ENCODE measurements at regions of chr16 and their contacts with region 1.

Region 1: GRCh38 chr16:77236063-77236511 is 36.9 kb downstream of the SYCE1L start:
- DNase-seq: peak; percentile 93
- H3K4me3 Mint-ChIP-seq: no peak overlapping the region
- H3K27ac Mint-ChIP-seq: no peak overlapping the region
- H3K4me1 Mint-ChIP-seq: peaks cover 3% of the 10 kb centered on the region
- H3K27me3 Mint-ChIP-seq: peaks cover 19% of the 10 kb centered on the region

Region 2: DNA sequence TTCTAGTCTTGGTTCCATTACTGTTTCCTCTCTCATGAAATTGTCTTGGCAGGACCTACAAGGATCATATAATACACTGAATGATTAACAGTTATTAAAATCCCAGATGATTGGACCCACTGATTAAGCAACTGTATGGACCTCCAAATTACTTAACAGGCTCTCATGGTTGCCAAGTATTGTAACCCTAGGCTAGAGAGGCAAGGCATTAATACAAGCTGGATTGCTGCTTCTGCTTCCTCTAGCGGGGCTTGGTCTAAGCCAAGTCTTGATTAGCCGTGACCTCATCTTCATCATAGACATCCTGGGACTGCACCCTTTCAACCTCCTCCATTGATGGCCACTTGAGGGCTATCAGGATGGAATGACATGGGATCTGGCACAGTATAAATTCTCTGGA is 10.1 kb after region 1 on chr16:
- CTCF ChIA-PET with region 1: interaction called, 13 read pairs
- intact Hi-C with region 1: no loop called
- DNase-seq: no peak
- H3K4me3 Mint-ChIP-seq: no peak overlapping the region
- H3K27ac Mint-ChIP-seq: no peak overlapping the region
- H3K4me1 Mint-ChIP-seq: no peaks in the 10 kb centered on the region
- H3K27me3 Mint-ChIP-seq: no peaks in the 10 kb centered on the region

Region 3: GRCh38 chr16:77376358-77376757 is 140.3 kb after region 1 on chr16:
- CTCF ChIA-PET with region 1: interaction called, 18 read pairs
- intact Hi-C with region 1: loop called (anchors 1 kb)
- DNase-seq: peak; percentile 7
- H3K4me3 Mint-ChIP-seq: no peak overlapping the region
- H3K27ac Mint-ChIP-seq: no peak overlapping the region
- H3K4me1 Mint-ChIP-seq: no peaks in the 10 kb centered on the region
- H3K27me3 Mint-ChIP-seq: peaks cover 4% of the 10 kb centered on the region

Region 4: DNA sequence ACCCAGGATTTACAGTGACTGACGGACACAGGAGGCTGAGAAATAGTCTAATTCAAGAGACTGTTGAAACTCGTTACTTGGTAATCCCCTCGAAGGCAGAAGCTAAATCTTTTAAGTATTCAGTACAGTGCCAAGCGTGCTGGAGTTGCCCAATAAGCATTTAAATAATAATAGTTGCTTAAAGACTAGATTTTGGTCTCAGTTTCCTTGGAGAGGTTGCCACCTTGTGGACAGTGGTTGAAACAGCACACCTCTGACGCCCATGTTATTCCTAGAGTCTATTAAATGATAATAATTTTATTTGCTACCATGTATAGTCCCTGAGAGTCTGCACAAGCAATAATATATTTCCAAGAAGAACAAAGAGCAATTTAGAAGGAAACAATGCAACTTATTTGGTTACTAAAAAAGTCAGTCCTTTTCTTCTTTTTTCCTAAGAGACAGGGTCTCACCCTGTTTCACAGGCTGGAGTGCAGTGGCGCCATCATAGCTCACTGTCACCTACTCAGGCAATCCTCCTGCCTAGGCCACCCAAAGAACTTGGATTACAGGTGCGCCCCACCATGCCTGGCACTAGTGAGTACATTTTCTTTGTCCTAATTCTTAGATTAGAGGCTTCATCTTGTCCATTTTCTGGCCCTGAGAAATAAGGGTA is 348.2 kb after region 1 on chr16:
- CTCF ChIA-PET with region 1: interaction called, 179 read pairs
- intact Hi-C with region 1: loop called (anchors 1 kb)
- DNase-seq: peak; percentile 63
- H3K4me3 Mint-ChIP-seq: no peak overlapping the region
- H3K27ac Mint-ChIP-seq: no peak overlapping the region
- H3K4me1 Mint-ChIP-seq: no peaks in the 10 kb centered on the region
- H3K27me3 Mint-ChIP-seq: peaks cover 17% of the 10 kb centered on the region

Region 5: DNA sequence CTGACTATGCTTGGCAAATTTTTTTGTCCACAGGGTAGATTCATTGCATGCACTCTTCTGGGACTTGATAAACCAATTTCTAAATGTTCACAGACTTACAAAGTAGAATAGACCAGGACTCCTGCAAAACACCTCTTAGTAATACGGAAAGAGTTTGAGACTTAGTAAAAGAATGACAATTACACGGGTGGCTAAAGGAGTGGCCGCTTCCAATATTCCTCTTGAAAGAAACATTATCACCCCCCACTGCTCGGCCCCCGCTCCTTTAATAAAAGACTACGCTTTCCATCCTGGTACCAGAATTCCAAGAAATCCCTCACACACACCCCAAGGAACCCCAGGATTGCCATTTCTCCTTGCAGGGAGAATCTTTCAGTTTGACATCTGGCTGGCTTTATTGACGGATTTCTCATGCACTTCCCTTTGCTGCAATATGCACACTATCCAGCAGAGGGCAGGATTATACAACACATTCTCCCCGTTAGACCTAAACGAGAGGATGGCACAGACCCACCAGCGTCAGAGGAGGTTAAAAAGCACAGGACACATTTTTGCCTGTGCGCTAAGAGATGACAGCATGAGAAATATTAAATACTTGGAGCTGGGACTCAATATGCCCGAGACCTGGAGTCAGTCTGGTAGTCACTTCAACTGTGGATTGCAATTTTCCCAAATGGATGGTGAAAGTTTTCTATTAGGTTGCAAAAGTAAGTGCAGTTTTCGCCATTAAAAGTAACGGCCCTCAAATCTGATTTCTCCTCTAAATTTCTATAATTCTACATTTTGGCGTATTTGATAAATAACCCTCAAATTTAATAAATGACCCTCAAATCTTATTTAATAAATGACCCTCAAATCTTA is 439.6 kb after region 1 on chr16:
- CTCF ChIA-PET with region 1: no interaction called
- intact Hi-C with region 1: loop called (anchors 5 kb)
- DNase-seq: peak; percentile 79
- H3K4me3 Mint-ChIP-seq: no peak overlapping the region
- H3K27ac Mint-ChIP-seq: no peak overlapping the region
- H3K4me1 Mint-ChIP-seq: no peaks in the 10 kb centered on the region
- H3K27me3 Mint-ChIP-seq: peaks cover 4% of the 10 kb centered on the region

Region 6: DNA sequence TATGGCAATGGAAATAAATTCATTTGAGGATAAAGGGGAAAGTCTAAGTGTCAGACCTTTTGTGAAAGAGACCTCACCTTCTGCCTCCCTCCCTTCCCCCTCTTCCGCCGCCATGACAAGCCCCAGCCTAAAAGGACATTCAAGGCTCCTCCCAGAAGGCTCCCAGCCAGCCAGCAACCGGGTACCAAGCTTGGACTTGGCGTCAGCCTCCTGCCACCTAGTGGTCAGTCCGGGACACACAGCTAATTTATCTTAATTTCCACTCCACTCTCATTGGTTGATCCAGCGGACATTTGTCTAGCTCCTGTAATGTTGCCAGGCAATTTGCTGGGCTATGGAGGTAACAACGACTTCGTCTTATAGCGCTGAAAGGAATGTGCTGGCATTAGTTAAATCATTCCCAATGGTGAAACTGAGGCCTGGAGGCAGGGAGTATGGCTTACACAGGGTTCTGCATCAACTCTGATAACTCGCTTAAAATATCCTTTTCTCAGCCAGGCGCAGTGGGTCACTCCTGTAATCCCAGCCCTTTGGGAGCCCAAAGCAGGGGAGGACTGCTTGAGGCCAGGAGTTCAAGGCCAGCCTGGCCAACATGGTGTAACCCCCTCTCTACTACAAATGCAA is 766.9 kb after region 1 on chr16:
- CTCF ChIA-PET with region 1: interaction called, 4 read pairs
- intact Hi-C with region 1: loop called (anchors 1 kb)
- DNase-seq: peak; percentile 89
- H3K4me3 Mint-ChIP-seq: no peak overlapping the region
- H3K27ac Mint-ChIP-seq: no peak overlapping the region
- H3K4me1 Mint-ChIP-seq: no peaks in the 10 kb centered on the region
- H3K27me3 Mint-ChIP-seq: peaks cover 9% of the 10 kb centered on the region